ENCODE measurements at regions of chr14 and their contacts with region 1.

Region 1: DNA sequence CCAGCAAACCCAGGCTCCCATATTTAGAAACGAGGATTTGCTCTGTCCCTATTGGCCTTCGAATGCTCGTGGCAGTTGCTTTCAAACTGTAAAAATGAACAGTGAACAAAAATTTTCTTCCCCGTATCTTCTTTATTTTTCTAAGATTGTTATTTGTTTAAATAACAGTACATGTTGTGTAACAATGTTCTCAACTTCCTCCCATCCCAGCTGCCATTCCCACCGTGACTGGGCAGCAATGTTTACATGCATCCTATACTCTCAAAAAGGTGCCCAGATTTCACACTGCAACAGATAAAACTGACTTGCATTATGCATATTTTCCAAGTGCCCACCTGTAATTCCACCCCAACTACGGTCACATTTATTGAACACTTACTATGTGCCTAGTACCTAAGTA is 12.8 kb downstream of the VCPKMT start:
- DNase-seq: no peak
- H3K4me3 ChIP-seq: no peak overlapping the region
- H3K27me3 ChIP-seq: no peaks in the 10 kb centered on the region
- CTCF ChIP-seq: no peak

Region 2: GRCh38 chr14:49852301-49853157 is 251.0 kb before region 1 on chr14 and contains the start of gene NEMF:
- CTCF ChIA-PET with region 1: interaction called, 20 read pairs
- POLR2A ChIA-PET with region 1: no interaction called
- DNase-seq: peak; percentile 47
- H3K4me3 ChIP-seq: peak within 1 kb of the TSS; percentile 88
- H3K27me3 ChIP-seq: no peaks in the 10 kb centered on the region
- CTCF ChIP-seq: peak; percentile 79
- polyA plus RNA-seq, gene NEMF: 12.6 and 28.5 TPM in 2 replicates

Region 3: DNA sequence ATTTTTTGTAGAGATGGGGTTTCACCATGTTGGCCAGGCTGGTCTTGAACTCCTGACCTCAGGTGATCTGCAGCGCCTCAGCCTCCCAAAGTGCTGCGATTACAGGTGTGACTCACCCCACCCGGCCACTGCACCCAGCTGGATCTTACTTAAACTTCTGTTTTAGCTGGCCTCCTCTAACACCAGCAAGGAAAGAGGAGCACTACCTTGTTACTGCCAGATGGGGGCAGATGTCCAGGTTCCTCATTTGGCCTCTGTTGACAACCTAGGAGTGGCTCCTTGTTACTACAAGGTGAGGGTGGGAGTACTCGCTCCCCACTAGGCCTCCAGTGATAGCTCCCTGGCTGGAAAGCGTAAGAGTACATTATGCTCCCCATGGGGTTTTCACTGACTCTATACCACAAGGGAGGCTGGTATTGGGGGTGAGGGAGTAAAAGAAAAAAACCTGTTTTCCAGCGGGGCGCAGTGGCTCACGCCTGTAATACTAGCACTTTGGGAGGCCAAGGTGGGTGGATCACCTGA is 223.8 kb before region 1 on chr14:
- CTCF ChIA-PET with region 1: interaction called, 13 read pairs
- POLR2A ChIA-PET with region 1: no interaction called
- DNase-seq: no peak
- H3K4me3 ChIP-seq: no peak overlapping the region
- H3K27me3 ChIP-seq: no peaks in the 10 kb centered on the region
- CTCF ChIP-seq: peak; percentile 68

Region 4: GRCh38 chr14:50038398-50039119 is 65.0 kb before region 1 on chr14:
- CTCF ChIA-PET with region 1: interaction called, 12 read pairs
- POLR2A ChIA-PET with region 1: no interaction called
- DNase-seq: peak; percentile 92
- H3K4me3 ChIP-seq: no peak overlapping the region
- H3K27me3 ChIP-seq: no peaks in the 10 kb centered on the region
- CTCF ChIP-seq: peak; percentile 42

Region 5: GRCh38 chr14:51310505-51310944 is 1207.0 kb after region 1 on chr14:
- CTCF ChIA-PET with region 1: no interaction called
- POLR2A ChIA-PET with region 1: no interaction called
- DNase-seq: peak; percentile 59
- H3K4me3 ChIP-seq: no peak overlapping the region
- H3K27me3 ChIP-seq: no peaks in the 10 kb centered on the region
- CTCF ChIP-seq: no peak

Measured in BJ (cell line).